Naive thymus-derived CD8-positive, alpha-beta T cell (primary cell): ENCODE measurements at regions of chr10 and their contacts with region 1.

Region 1: DNA sequence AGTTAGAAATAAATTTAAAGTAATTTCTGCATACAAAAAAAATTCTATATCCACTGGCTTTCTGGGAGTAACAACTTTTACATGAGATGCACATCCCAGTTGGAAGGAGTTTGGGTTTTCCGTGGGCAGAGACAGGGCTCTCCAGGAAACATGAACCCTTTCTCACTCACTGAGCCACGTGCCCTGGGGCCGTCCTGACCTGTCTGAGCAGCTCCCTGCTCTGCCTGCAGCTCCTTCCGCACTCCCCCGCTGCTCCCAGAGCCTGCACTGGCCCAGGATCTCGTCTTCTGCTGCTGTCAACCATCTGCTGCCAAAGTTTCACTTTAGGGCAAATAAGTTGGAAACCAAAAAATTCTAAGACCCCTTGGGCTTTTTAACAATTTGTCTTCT is 169.1 kb downstream of the DIP2C start:
- DNase-seq: no peak
- ATAC-seq: no peak
- H3K4me3 Mint-ChIP-seq: no peak overlapping the region
- H3K27ac Mint-ChIP-seq: no peak overlapping the region
- H3K4me1 Mint-ChIP-seq: no peaks in the 10 kb centered on the region
- H3K27me3 Mint-ChIP-seq: peaks cover 4 to 18% (median 11%) of the 10 kb centered on the region in 5 donors

Region 2: GRCh38 chr10:285216-285615 is 235.2 kb before region 1 on chr10:
- POLR2A ChIA-PET with region 1: interaction called, 10 read pairs
- DNase-seq: no peak
- ATAC-seq: no peak
- H3K4me3 Mint-ChIP-seq: no peak overlapping the region
- H3K27ac Mint-ChIP-seq: peak overlapping the region in 1 of 10 donors; percentile 40
- H3K4me1 Mint-ChIP-seq: peaks cover 0 to 3% (median 0%) of the 10 kb centered on the region in 4 donors
- H3K27me3 Mint-ChIP-seq: peaks cover 0 to 2% (median 0%) of the 10 kb centered on the region in 5 donors

Region 3: DNA sequence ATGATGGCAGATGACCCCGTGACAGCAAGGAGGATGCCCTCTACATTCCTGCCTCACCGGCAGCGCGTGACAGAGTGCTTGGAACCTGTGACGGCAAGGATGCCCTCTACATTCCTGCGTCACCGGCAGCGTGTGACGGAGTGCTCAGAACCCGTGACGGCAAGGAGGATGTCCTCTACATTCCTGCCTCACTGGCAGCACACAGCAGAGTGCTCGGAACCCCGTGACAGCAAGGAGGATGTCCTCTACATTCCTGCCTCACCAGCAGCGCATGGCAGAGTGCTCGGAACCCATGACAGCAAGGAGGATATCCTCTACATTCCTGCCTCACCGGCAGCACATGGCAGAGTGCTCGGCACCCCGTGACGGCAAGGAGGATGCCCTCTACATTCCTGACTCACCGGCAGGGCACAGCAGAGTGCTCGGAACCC is 62.0 kb before region 1 on chr10:
- POLR2A ChIA-PET with region 1: no interaction called
- DNase-seq: no peak
- ATAC-seq: no peak
- H3K4me3 Mint-ChIP-seq: no peak overlapping the region
- H3K27ac Mint-ChIP-seq: peak overlapping the region in 1 of 10 donors; percentile 49
- H3K4me1 Mint-ChIP-seq: peaks cover 16 to 50% (median 29%) of the 10 kb centered on the region in 4 donors
- H3K27me3 Mint-ChIP-seq: peaks cover 0 to 4% (median 0%) of the 10 kb centered on the region in 5 donors